ENCODE measurements at regions of chr12 and their contacts with region 1.

Region 1: GRCh38 chr12:1262011-1262410 is 271.0 kb downstream of the ERC1 start:
- DNase-seq: no peak
- H3K4me3 ChIP-seq: no peak overlapping the region
- H3K27ac ChIP-seq: no peak overlapping the region
- H3K4me1 ChIP-seq: no peaks in the 10 kb centered on the region
- H3K27me3 ChIP-seq: no peaks in the 10 kb centered on the region
- CTCF ChIP-seq: no peak

Region 2: GRCh38 chr12:466762-467161 is 795.2 kb before region 1 on chr12:
- CTCF ChIA-PET with region 1: interaction called, 27 read pairs
- dilution Hi-C with region 1: no loop called
- in situ Hi-C with region 1: no loop called
- intact Hi-C with region 1: no loop called
- DNase-seq: no peak
- H3K4me3 ChIP-seq: no peak overlapping the region
- H3K27ac ChIP-seq: no peak overlapping the region
- H3K4me1 ChIP-seq: peaks cover 14% of the 10 kb centered on the region
- H3K27me3 ChIP-seq: peaks cover 4% of the 10 kb centered on the region
- CTCF ChIP-seq: no peak

Measured in mammary epithelial cell (primary cell).